MCF 10A (cell line): ENCODE measurements at regions of chr5 and their contacts with region 1.

Region 1: DNA sequence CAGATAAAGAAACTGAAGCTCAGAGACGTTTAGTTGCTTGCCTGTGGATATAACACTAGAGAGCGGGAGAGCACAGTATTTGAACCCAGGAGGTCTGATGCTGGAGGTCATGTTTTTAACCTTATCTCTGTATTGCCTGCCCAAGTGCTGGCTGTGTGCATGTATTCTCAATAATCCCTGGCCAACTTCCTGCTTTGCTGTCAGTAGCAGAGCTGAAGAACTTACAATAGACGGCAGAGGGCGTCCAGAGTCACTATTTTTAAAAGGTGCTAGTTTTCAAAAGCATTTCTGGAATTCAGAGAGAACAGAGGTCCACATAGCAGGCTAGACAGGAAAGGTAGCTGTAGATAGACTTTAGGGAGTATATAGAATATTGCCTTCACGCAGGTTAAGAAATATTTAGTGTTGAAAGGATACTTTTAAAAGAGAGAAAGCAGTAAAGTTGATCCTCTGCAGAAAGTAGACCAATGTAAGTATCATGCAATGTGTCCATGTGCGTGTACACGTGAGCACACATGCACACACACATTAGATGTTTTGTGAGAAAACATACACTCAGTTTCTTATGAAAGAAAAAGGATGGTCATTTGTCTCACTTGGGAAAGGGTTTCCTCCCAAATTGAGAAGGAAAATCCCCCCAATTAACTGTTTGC is 46.3 kb downstream of the PTCD2 start:
- DNase-seq: peak; percentile 80
- H3K4me3 Mint-ChIP-seq: no peak overlapping the region
- H3K27ac Mint-ChIP-seq: no peak overlapping the region
- H3K4me1 Mint-ChIP-seq: peaks cover 39% of the 10 kb centered on the region
- H3K27me3 Mint-ChIP-seq: no peaks in the 10 kb centered on the region
- CTCF ChIP-seq: peak; percentile 73

Region 2: GRCh38 chr5:72355706-72356299 is 10.6 kb before region 1 on chr5:
- CTCF ChIA-PET with region 1: interaction called, 32 read pairs
- POLR2A ChIA-PET with region 1: interaction called, 4 read pairs
- intact Hi-C with region 1: no loop called
- DNase-seq: peak; percentile 61
- H3K4me3 Mint-ChIP-seq: no peak overlapping the region
- H3K27ac Mint-ChIP-seq: no peak overlapping the region
- H3K4me1 Mint-ChIP-seq: peaks cover 13% of the 10 kb centered on the region
- H3K27me3 Mint-ChIP-seq: no peaks in the 10 kb centered on the region
- CTCF ChIP-seq: peak; percentile 35

Region 3: DNA sequence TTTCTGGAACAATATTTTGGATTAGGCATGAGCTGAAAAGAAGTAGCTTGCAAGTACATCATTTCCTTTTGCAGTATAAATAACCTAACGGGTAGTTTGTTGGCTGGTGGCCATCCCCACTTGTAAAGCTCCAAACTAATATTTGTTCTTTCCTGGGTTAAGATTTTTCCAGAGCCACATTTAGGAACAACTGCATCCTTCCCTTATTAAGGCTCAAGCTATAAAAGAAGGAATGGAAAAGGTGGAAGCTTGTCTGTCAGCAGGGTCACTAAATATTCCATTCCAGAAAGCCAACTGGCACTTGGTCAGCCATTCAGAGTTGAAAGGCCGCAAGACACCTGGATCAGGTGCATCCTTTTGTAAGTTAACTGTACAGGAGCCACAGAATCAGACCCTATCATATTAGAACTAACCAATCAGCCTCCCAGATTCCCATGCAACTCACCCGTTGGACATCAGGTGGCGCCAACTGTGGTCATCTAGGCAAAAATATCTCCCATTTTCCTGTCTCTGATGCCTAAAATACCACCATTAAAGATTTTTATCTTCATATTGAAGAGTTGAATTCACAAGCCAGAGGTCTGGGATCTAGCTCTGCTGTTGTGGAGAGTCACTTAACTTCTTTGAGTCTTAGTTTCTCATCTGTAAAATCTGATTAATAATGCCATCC is 36.6 kb after region 1 on chr5:
- CTCF ChIA-PET with region 1: interaction called, 13 read pairs
- POLR2A ChIA-PET with region 1: interaction called, 29 read pairs
- intact Hi-C with region 1: no loop called
- DNase-seq: no peak
- H3K4me3 Mint-ChIP-seq: no peak overlapping the region
- H3K27ac Mint-ChIP-seq: peak overlapping the region; percentile 82
- H3K4me1 Mint-ChIP-seq: peaks cover 13% of the 10 kb centered on the region
- H3K27me3 Mint-ChIP-seq: no peaks in the 10 kb centered on the region
- CTCF ChIP-seq: peak; percentile 24

Region 4: DNA sequence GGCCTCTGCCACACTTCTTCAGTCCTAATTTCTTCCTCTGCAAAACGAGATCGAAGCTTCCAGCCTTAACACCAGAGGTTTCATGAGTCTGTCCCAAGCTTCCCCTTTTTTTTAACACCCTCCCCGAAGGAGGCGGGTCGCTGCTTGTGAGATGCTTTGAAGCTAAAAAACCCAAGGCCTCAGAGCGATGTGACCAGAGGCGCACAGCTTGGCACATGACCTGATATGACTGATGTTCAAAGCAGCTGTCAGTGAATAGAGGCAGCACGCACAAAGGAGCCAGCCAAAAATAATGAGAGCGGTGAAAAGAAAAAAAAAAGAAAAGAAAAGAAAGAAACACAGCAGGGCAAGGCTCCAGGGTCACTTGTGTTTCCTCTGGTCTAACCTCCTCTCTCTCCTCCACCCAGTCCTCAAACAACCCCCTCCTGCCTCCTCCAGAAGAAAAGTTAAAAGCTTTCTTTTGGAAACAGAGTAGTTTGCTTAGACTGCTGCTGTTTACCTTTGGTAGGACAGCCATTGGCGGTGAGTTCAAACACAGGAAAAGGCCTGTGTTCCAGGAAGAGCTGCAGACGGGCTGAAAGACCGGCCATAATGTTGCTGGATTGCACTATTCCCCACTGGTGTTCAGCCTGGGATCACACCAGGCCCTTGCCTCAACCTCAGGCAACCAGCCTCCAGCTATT is 151.7 kb after region 1 on chr5:
- CTCF ChIA-PET with region 1: interaction called, 124 read pairs
- POLR2A ChIA-PET with region 1: interaction called, 74 read pairs
- intact Hi-C with region 1: no loop called
- DNase-seq: no peak
- H3K4me3 Mint-ChIP-seq: no peak overlapping the region
- H3K27ac Mint-ChIP-seq: no peak overlapping the region
- H3K4me1 Mint-ChIP-seq: no peaks in the 10 kb centered on the region
- H3K27me3 Mint-ChIP-seq: no peaks in the 10 kb centered on the region
- CTCF ChIP-seq: no peak

Region 5: DNA sequence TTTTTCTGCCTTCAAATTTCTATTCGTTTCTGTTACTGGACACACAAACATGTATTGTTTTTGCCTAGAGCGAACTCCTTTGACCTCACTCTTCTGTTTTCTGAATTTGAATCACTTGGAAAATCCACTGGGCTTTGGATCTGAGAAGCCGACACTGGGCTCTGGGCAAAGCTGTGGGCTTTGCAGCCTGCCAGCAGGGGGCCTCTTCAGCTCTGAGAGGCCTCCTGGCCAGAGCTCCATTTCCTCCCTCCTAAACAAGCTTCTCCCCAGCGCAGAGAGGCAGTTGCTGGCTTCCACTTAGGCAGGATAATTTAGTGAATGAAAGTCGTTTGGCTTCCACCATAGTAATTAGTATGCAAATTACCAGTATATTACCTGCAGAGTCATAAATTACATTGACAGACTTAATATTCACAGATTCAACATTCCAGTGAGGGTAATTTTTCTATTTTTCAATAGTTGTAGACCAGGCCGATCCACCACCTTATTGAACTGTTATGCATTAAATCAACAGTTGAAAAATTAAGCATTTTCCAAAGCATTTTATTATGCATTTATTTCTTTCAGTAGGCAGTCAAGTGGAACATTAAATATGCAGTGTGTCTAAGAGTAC is 244.8 kb after region 1 on chr5:
- CTCF ChIA-PET with region 1: interaction called, 6 read pairs
- POLR2A ChIA-PET with region 1: no interaction called
- intact Hi-C with region 1: loop called (anchors 5 kb)
- DNase-seq: peak; percentile 78
- H3K4me3 Mint-ChIP-seq: no peak overlapping the region
- H3K27ac Mint-ChIP-seq: no peak overlapping the region
- H3K4me1 Mint-ChIP-seq: peaks cover 3% of the 10 kb centered on the region
- H3K27me3 Mint-ChIP-seq: no peaks in the 10 kb centered on the region
- CTCF ChIP-seq: peak; percentile 86